KBM-7 (cell line): ENCODE measurements at regions of chr4 and their contacts with region 1.

Region 1: DNA sequence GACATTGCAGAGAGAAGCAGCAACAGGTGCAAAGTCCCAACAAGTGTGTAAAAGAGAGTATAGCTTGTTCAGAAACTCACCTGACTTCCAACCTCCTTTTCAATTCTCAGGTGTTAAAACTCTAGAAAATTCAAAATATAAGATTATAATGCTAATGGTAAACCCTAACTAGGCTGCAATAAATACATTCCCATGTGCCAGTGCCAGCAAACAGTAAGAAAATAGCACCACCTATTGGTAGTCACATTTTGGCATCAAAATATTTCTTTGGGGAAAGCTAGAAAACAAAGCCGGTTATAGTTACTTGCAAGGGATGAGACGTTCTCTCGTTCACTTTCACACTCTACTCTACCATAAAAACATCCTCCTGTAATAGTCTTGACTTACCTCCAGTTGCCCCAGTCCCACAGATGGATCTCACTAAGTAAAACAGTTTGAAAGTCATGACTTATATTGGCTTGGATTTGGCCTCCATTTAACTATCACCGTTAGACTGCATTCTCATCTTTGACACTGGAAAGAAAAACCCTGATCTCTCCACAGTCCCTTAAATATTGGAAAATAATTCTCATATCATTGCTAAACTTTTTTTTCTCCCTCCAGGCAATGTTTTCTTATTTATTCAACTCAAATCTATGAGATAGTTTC is 9.6 kb downstream of the BMP3 start:
- DNase-seq: peak; percentile 55

Region 2: GRCh38 chr4:80365928-80366327 is 674.2 kb before region 1 on chr4:
- in situ Hi-C with region 1: loop called (anchors 25 kb)
- DNase-seq: peak; percentile 51

Region 3: GRCh38 chr4:81214881-81215868 is 175.0 kb after region 1 on chr4 and contains the start of gene PRKG2:
- in situ Hi-C with region 1: no loop called
- DNase-seq: no peak